ENCODE measurements at regions of chr6 and their contacts with region 1.

Region 1: DNA sequence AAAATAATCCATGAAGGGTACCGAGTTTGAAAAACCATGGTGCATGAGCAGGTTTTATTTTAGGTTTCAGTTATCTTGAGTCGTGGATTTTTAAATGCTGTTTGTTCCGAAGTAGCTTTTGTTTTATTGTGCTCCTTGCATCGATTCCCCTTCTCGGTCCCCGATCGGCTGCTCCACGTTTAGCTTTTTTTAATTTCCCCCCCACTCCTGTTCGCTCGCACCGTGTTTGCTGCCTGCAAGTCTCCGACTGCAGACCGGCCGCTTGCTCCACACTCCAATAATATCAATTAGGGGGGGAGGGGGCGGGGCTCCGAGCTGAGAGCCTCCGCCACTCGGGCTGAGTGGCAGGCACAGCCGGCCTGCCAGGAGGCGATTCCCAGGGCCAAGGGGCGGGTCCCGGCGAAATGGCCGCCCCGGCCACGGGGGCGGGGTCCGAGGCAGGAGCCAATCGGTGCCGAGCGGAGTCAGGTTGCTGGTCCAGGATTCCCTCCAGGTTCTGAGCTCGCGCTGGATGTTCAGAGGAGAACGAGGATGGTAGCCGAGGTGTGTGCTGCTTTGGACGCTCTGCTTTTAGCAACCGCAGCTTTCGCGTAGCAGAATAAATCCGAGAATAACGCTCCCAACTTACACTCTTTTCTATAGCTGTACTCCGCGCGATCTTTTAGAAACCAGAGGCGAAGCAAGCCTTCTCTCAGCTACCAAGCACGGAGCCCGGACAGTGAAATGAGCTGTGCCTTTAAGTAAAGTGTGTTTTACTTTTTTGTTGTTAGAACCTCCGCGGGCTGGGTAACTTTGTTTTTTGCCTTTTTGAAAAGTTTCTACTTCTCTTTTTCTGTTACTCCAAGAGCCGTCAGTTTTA is at the start of gene EPHA7:
- DNase-seq: peak; percentile 91
- ATAC-seq: peak; percentile 94 to 97
- total RNA-seq, gene EPHA7: 6.7 to 9.8 TPM

Region 2: GRCh38 chr6:92737983-92738382 is 681.5 kb before region 1 on chr6:
- intact Hi-C with region 1: no loop called
- DNase-seq: no peak
- ATAC-seq: no peak

Region 3: GRCh38 chr6:92810913-92811312 is 608.6 kb before region 1 on chr6:
- intact Hi-C with region 1: loop called in 1 of 2 experiments (anchors 5 kb)
- DNase-seq: peak; percentile 21
- ATAC-seq: no peak

Region 4: DNA sequence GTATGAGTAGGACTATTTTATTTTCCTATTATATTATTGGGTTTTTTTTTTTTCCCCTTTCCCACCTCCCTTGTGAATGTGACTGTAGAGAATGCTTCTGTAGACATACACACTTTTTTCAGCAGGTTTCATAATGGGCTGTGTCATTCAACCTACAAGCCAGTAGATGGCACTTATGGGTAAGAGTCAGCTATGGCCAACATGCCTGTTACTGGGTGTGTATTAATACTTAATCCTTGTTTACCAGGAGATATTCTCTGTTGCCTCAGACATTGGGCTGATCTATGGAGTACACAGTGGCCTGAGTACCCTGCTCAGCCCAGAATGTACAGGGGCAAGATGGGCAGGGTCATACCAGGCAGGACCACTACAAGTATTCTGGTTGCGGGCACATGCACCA is 382.7 kb before region 1 on chr6:
- intact Hi-C with region 1: loop called in 1 of 2 experiments (anchors 10 kb)
- DNase-seq: no peak
- ATAC-seq: no peak

Region 5: DNA sequence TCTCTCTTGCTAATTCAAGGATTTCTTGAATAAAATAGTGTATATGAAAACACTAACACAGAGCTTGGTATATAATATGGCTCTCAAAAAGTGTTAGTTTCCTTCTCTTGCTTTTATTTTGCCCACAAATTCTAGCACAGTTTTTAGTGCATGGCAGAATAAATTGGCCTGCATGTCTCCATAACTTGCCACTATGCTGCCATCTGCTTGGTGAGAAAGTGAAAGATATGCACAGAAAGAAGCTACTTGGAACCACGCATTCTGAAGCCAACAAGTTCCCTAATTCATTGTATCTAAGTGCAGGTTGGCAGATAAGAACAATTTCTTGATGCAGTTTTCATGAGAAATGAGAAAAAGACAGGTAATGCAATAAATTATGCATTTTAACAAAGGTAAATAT is 101.4 kb before region 1 on chr6:
- intact Hi-C with region 1: no loop called
- DNase-seq: no peak
- ATAC-seq: no peak